Activated naive CD4-positive, alpha-beta T cell treated with anti-CD3 and anti-CD28 coated beads for 36 hours (primary cell): ENCODE measurements at regions of chr1 and their contacts with region 1.

Region 1: DNA sequence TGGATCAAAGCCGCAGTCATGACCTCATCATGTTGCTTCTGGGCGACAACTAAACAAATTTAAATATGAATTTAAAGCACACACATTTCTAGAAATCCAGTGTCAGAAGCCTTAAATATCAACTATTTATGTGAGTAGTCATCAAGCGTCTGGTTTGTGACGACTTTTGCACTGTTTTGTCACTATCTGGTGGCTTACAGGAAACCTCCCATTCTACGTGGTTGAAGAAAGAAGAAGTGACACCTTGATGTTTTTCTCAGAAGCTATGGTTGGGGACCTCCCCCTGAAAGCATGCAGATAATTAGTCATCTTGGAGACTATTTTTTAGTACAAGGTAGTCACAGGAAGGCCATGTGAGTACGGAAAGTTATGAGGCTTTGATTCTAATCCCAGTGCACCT is 58.5 kb downstream of the TENT5C start:
- DNase-seq: peak; percentile 89
- H3K4me3 Mint-ChIP-seq: no peak overlapping the region
- H3K27ac Mint-ChIP-seq: peak overlapping the region; percentile 71
- H3K4me1 Mint-ChIP-seq: peaks cover 71% of the 10 kb centered on the region
- H3K27me3 Mint-ChIP-seq: peaks cover 6% of the 10 kb centered on the region

Region 2: GRCh38 chr1:116763787-116764465 is 900.4 kb before region 1 on chr1:
- CTCF ChIA-PET with region 1: no interaction called
- intact Hi-C with region 1: loop called (anchors 1 kb)
- DNase-seq: peak; percentile 68
- H3K4me3 Mint-ChIP-seq: peak overlapping the region; percentile 100
- H3K27ac Mint-ChIP-seq: peak overlapping the region; percentile 100
- H3K4me1 Mint-ChIP-seq: peaks cover 87% of the 10 kb centered on the region
- H3K27me3 Mint-ChIP-seq: no peaks in the 10 kb centered on the region

Region 3: DNA sequence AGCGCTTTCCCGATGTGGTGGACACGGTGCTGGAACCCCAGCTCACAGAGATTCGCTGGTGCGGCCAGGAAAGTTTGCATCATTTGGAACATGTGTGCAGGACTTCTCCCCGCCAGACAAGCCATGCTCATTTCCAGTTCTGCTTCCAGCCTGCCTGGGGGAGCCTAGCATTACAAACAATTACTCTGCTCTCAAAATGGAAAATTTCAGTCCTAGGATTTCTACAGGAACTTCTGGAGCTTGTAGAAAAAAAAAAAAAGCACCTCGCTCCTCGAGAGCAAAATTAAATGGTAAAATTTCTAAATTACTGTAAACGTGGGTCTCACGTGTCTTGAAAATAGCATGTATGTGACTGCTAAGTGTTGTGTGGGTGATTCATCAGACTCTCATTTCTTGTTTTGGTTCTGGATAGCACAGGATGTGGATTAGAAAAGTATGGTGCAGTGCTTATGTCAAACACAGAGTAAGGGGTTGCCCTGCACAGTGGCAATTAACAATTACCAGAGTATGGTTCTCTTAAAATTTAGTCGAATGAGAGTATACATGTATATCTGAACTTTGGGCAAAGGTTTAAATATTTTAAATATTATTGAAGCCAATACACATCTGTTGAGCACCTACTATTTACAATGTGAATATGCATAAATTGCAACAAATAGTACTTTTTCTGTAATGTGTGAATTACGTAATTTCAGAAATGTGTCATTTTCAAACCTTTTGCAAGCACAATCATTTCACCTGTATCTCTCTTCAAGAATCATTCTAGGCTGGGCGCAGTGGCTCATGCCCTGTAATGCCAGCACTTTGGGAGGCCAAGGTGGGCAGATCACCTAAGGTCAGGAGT is 816.4 kb before region 1 on chr1:
- CTCF ChIA-PET with region 1: no interaction called
- intact Hi-C with region 1: loop called (anchors 1 kb)
- DNase-seq: peak; percentile 62
- H3K4me3 Mint-ChIP-seq: no peak overlapping the region
- H3K27ac Mint-ChIP-seq: peak overlapping the region; percentile 51
- H3K4me1 Mint-ChIP-seq: peaks cover 37% of the 10 kb centered on the region
- H3K27me3 Mint-ChIP-seq: no peaks in the 10 kb centered on the region

Region 4: DNA sequence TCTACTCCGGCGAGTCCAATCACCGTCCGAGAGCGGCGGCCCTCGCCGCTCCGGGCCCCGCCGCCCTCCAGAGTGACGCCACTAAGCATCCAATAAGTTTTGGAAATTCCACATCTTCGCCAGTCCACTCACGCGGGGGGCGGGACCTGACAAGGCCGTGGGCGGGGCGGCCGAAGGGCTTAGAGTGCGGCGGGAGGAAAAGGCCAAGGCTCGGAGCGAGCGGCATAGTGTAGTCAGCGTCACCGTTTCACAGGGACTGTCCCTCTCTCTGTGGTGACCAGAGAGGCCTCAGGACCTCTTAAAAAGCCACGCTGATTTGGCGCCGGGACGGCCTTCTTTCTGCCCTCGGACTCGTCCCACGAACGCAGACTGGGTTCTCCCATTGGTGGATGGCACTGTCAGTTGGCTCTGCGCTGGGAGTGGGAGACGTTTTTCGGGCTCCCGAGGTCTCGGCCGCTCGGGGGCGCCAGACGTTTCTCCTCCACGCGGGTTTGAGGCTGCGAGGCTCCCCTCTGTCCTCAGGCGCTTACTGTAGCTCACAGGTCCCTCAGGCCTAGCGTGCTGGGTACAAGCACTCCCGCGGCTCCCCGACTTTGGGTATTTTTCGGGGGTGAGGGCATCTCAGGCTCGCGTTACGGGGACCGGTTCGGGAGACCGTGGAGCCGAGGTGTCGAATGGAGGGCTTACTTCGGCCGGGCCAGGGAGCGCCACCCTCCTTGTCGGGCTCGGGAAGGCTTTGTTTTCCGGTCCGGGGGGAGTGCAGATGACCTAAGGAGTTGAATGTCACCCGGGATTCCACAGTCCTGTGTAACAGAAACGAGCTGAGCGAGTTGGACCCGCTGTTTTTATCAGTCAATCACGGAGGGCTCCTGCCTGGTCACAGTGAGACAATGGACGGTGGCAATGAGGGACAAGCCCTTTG is 542.3 kb before region 1 on chr1:
- CTCF ChIA-PET with region 1: no interaction called
- intact Hi-C with region 1: loop called (anchors 1 kb)
- DNase-seq: peak; percentile 90
- H3K4me3 Mint-ChIP-seq: peak overlapping the region; percentile 73
- H3K27ac Mint-ChIP-seq: no peak overlapping the region
- H3K4me1 Mint-ChIP-seq: no peaks in the 10 kb centered on the region
- H3K27me3 Mint-ChIP-seq: peaks cover 12% of the 10 kb centered on the region

Region 5: DNA sequence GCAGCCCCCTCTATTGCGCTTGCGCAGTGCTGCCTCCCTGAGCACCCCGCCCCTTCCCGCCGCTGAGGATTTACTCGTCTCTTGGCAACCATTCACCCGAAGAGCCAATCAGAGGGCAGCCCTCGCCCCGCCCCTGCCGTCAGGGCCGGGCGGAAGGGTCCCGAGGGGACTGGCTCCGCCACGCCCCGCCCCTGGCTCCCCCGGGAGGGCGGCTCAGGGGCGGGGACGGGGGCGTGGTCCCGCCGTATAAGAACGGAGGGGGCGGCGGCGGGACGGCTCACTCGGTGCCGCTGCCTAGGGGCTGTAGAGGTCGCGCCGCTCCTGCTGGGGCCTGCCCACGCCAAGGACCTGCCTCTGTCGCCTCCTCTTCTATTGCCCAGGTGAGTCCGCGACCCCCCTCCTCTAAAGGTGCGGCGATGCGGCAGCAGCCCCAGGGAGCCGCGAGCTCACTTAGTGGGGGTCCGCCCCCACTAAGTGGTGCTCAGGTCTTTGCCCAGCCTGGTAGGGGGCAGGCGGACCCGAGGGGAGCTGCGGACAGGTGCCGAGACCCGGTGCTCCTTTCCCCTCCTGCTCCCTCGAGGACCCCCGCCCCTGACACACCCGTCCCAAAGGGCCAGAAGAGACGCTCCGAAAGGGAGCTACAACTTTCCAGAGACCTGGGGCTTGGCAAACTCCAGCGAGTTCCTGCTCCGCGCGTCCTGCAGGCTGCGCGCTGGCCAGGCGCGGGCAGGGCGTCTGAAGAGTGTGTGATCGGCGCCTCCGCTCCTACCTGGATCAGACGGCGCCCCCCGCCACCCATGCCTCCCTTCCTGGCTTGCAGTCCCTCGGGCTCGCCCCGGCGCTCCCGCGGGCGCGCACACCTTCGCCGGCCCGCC is 58.3 kb before region 1 on chr1 and contains the start of gene TENT5C:
- CTCF ChIA-PET with region 1: interaction called, 3 read pairs
- intact Hi-C with region 1: loop called (anchors 1 kb)
- DNase-seq: peak; percentile 98
- H3K4me3 Mint-ChIP-seq: peak within 1 kb of the TSS; percentile 86
- H3K27ac Mint-ChIP-seq: peak within 1 kb of the TSS; percentile 78
- H3K4me1 Mint-ChIP-seq: peaks cover 22% of the 10 kb centered on the region
- H3K27me3 Mint-ChIP-seq: peaks cover 2% of the 10 kb centered on the region
- total RNA-seq, gene TENT5C: 10.7 to 11.2 TPM

Region 6: DNA sequence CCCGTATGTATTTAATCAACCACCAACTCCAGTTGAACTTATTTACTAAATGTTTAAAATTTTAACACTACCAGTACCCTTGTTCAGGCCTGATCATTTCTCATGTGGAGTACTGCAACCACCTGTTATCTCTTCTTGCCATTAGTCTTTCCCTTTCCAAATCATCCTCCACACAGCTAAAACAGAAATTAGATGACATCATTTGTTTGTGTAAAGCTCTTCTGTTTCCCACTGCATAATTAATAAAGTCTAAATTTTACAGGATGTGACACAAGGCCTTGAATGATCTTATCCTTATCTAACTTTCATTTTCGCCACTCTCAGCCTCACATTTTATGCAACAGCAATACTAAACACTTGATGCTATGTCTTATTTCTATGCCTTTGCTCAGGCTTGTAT is 240.7 kb after region 1 on chr1:
- CTCF ChIA-PET with region 1: no interaction called
- intact Hi-C with region 1: no loop called
- DNase-seq: no peak
- H3K4me3 Mint-ChIP-seq: no peak overlapping the region
- H3K27ac Mint-ChIP-seq: no peak overlapping the region
- H3K4me1 Mint-ChIP-seq: no peaks in the 10 kb centered on the region
- H3K27me3 Mint-ChIP-seq: no peaks in the 10 kb centered on the region

Region 7: GRCh38 chr1:119140177-119141019 is 1476.1 kb after region 1 on chr1 and contains the start of gene WARS2:
- CTCF ChIA-PET with region 1: no interaction called
- intact Hi-C with region 1: loop called (anchors 2 kb)
- DNase-seq: peak; percentile 95
- H3K4me3 Mint-ChIP-seq: no peak within 1 kb of the TSS
- H3K27ac Mint-ChIP-seq: no peak within 1 kb of the TSS
- H3K4me1 Mint-ChIP-seq: peaks cover 27% of the 10 kb centered on the region
- H3K27me3 Mint-ChIP-seq: no peaks in the 10 kb centered on the region
- total RNA-seq, gene WARS2: 28.3 to 30.0 TPM